ENCODE measurements at regions of chr1 and their contacts with region 1.

Region 1: DNA sequence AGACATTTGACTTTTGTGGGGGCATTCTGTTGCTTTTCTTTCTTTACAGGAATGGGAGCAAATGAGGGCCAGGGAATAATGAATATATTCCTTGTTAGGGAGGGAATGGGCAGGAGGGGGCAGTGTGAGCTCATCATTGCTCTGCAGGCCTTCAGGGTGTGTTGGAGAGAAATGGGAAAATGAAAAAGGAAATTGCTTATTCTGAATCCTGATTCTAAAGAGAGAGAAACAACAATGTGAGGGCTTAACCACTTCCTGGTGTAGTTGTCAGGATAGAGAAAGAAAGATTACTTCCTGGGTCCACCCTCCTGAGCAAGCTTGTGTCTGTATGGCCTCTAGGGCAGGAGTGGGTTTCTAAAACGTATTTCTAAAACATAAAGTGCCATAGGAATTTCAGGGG is 28.3 kb downstream of the VANGL2 start:
- DNase-seq: peak in 6 of 9 experiments; percentile 24 to 73 (median 54)
- ATAC-seq: peak; percentile 54
- H3K4me3 ChIP-seq: peak overlapping the region in 1 of 2 experiments; percentile 20
- H3K4me3 Mint-ChIP-seq: peak overlapping the region; percentile 55
- H3K27ac ChIP-seq: peak overlapping the region; percentile 50 to 86
- H3K27ac Mint-ChIP-seq: peak overlapping the region; percentile 86
- H3K4me1 ChIP-seq: peaks cover 63% of the 10 kb centered on the region
- H3K4me1 Mint-ChIP-seq: peaks cover 62% of the 10 kb centered on the region
- H3K27me3 ChIP-seq: no peaks in the 10 kb centered on the region
- H3K27me3 Mint-ChIP-seq: no peaks in the 10 kb centered on the region
- CTCF ChIP-seq: peak; percentile 41

Region 2: GRCh38 chr1:160377585-160378206 is 51.0 kb before region 1 on chr1:
- CTCF ChIA-PET with region 1: no interaction called
- POLR2A ChIA-PET with region 1: no interaction called
- intact Hi-C with region 1: no loop called
- DNase-seq: peak in 1 of 9 experiments; percentile 13
- ATAC-seq: no peak
- H3K4me3 ChIP-seq: no peak overlapping the region
- H3K4me3 Mint-ChIP-seq: no peak overlapping the region
- H3K27ac ChIP-seq: no peak overlapping the region
- H3K27ac Mint-ChIP-seq: no peak overlapping the region
- H3K4me1 ChIP-seq: peaks cover 12% of the 10 kb centered on the region
- H3K4me1 Mint-ChIP-seq: peaks cover 15% of the 10 kb centered on the region
- H3K27me3 ChIP-seq: no peaks in the 10 kb centered on the region
- H3K27me3 Mint-ChIP-seq: no peaks in the 10 kb centered on the region
- CTCF ChIP-seq: no peak

Region 3: GRCh38 chr1:160494620-160495019 is 66.0 kb after region 1 on chr1:
- CTCF ChIA-PET with region 1: interaction called, 4 read pairs
- POLR2A ChIA-PET with region 1: no interaction called
- intact Hi-C with region 1: loop called in 1 of 2 experiments (anchors 5 kb)
- DNase-seq: peak in 2 of 9 experiments; percentile 29 to 31
- ATAC-seq: no peak
- H3K4me3 ChIP-seq: no peak overlapping the region
- H3K4me3 Mint-ChIP-seq: no peak overlapping the region
- H3K27ac ChIP-seq: no peak overlapping the region
- H3K27ac Mint-ChIP-seq: no peak overlapping the region
- H3K4me1 ChIP-seq: no peaks in the 10 kb centered on the region
- H3K4me1 Mint-ChIP-seq: peaks cover 36% of the 10 kb centered on the region
- H3K27me3 ChIP-seq: no peaks in the 10 kb centered on the region
- H3K27me3 Mint-ChIP-seq: no peaks in the 10 kb centered on the region
- CTCF ChIP-seq: no peak

Measured in CD8-positive, alpha-beta T cell (primary cell).